Activated CD4-positive, alpha-beta T cell treated with anti-CD3 and anti-CD28 coated beads for 36 hours (primary cell): ENCODE measurements at regions of chr6 and their contacts with region 1.

Region 1: DNA sequence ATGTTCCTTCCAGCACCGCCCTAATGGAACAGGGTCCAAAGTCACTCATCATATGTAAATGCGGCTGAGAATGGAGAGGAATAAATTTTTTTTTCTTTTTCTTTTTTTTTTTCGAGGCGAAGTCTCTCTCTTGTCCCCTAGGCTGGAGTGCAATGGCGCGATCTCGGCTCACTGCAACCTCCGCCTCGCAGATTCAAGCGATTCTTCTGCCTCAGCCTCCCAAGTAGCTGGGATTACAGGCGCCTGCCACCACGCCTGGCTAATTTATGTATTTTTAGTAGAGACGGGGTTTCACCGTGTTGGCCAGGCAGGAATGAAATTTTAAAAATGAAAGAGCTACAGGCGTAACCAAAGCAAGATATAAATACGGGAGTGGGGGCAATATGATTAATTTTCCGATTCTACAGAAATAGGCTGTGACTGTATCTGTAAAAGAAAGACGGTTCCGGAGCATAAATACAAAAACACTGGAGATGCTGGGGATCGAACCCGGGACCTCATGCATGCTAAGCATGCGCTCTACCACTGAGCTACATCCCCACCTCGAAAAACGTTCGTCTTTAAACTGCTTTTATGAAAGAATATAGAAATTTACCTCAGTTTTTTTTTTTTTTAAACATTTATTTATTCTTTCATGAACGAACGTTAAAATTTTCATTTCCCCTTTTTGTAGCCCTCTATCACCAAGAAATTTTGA is 132.2 kb downstream of the GPX5 start:
- DNase-seq: peak; percentile 84
- ATAC-seq: peak; percentile 94
- H3K4me3 Mint-ChIP-seq: peak overlapping the region; percentile 77
- H3K27ac Mint-ChIP-seq: peak overlapping the region; percentile 76
- H3K4me1 Mint-ChIP-seq: peaks cover 24% of the 10 kb centered on the region
- H3K27me3 Mint-ChIP-seq: peaks cover 50% of the 10 kb centered on the region

Region 2: GRCh38 chr6:27902335-27903314 is 755.3 kb before region 1 on chr6:
- CTCF ChIA-PET with region 1: no interaction called
- POLR2A ChIA-PET with region 1: no interaction called
- intact Hi-C with region 1: loop called in 1 of 2 experiments (anchors 10 kb)
- DNase-seq: peak; percentile 91
- ATAC-seq: peak; percentile 81
- H3K4me3 Mint-ChIP-seq: peak overlapping the region; percentile 74
- H3K27ac Mint-ChIP-seq: peak overlapping the region; percentile 89
- H3K4me1 Mint-ChIP-seq: peaks cover 5% of the 10 kb centered on the region
- H3K27me3 Mint-ChIP-seq: peaks cover 4% of the 10 kb centered on the region

Region 3: DNA sequence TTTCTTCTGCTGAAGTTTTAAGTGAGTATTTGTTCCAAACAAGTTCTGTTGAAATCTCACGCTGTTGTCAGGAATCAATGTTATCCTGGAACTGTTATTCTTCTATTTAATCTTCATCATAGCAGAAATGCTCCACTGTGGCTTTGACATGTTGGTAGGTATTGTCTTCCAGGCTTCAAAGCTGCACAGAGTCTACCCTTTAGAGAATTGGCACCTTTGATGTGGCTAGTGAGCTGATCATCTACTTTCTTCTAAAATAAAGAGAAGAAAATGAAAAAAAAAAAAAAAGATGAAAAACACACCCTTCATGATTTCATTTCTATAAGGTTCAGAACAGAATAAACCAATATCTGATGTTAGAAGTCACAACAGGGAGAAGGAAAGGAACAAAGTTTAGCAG is 208.9 kb before region 1 on chr6:
- CTCF ChIA-PET with region 1: no interaction called
- POLR2A ChIA-PET with region 1: no interaction called
- intact Hi-C with region 1: no loop called
- DNase-seq: no peak
- ATAC-seq: no peak
- H3K4me3 Mint-ChIP-seq: no peak overlapping the region
- H3K27ac Mint-ChIP-seq: no peak overlapping the region
- H3K4me1 Mint-ChIP-seq: peaks cover 22% of the 10 kb centered on the region
- H3K27me3 Mint-ChIP-seq: peaks cover 16% of the 10 kb centered on the region

Region 4: DNA sequence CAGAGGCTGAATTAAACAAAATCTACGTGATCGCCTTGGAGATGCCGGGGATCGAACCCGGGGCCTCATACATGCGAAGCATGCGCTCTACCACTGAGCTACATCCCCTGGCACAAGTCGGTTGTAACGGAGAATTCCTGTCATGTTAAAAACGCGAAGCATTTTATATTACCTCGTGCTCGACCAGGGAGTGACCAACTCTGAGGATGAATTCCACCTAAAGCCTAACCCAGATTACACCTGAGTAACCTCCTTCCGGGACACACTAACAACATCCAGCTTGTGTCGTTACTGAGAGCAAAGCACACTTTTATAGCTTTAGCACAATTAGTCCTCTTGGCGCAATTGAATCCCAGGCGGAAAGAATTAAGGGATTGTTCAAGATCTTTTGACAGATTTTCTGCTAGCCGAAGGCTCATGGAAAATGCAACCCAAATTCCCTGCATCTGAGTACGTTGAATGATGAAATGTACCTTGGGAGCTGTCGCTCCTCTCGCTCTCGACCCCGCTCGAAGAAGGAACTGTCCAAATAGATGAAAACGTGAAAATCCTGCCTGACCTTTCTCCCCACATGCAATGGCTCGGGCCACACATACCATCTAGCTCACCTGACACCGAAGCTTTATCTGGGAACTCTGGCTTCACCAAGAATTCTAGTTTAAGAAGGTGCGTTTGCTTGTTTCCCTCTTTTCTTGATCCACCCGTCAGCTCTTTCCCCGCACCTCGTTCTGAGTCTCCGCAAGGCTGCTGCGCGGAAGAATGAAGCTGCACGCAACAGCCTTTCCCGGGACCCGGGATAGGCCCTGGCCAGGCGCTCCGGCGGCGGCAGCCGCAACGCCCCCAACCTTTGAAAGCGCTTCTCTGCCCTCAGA is 16.1 kb after region 1 on chr6:
- CTCF ChIA-PET with region 1: interaction called, 3 read pairs
- POLR2A ChIA-PET with region 1: no interaction called
- intact Hi-C with region 1: loop called in 1 of 2 experiments (anchors 1 kb)
- DNase-seq: peak; percentile 82
- ATAC-seq: peak; percentile 75
- H3K4me3 Mint-ChIP-seq: peak overlapping the region; percentile 74
- H3K27ac Mint-ChIP-seq: peak overlapping the region; percentile 64
- H3K4me1 Mint-ChIP-seq: peaks cover 8% of the 10 kb centered on the region
- H3K27me3 Mint-ChIP-seq: peaks cover 59% of the 10 kb centered on the region

Region 5: DNA sequence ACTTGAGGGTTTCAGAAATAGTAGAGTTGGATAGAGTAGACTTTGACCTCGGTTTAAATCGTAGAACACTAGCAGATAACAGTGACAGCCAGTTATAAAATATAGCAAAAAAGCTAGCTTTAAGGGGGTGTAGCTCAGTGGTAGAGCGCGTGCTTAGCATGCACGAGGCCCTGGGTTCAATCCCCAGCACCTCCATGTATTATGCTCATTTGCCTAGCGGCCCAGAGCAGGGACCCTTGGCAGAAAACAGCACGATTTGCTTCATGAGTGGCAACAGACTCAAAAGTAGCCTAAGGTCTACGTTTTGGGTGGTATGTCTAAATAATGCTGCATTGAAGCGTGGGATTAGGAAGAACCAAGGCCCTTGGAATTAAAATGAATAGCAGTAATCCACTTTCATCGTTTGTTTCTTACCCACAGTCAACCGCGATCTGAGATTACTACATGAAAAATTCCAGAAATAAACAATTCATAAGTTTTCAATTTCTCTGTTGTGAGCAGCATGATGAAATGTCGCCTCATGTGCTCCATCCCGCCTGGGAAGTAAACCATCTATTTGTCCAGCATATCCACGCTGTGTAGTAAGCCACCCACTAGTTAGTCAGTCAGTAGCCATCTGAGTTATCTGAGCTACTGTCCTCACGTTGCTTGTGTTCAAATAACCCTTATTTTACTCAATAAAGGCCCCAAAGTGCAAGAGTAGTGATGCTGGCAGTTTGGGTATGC is 52.7 kb after region 1 on chr6:
- CTCF ChIA-PET with region 1: interaction called, 3 read pairs
- POLR2A ChIA-PET with region 1: no interaction called
- intact Hi-C with region 1: loop called in 1 of 2 experiments (anchors 1 kb)
- DNase-seq: peak; percentile 59
- ATAC-seq: peak; percentile 45
- H3K4me3 Mint-ChIP-seq: peak overlapping the region; percentile 47
- H3K27ac Mint-ChIP-seq: no peak overlapping the region
- H3K4me1 Mint-ChIP-seq: peaks cover 4% of the 10 kb centered on the region
- H3K27me3 Mint-ChIP-seq: peaks cover 54% of the 10 kb centered on the region